Activated CD8-positive, alpha-beta T cell treated with anti-CD3 and anti-CD28 coated beads for 36 hours (primary cell): ENCODE measurements at regions of chr20 and their contacts with region 1.

Region 1: DNA sequence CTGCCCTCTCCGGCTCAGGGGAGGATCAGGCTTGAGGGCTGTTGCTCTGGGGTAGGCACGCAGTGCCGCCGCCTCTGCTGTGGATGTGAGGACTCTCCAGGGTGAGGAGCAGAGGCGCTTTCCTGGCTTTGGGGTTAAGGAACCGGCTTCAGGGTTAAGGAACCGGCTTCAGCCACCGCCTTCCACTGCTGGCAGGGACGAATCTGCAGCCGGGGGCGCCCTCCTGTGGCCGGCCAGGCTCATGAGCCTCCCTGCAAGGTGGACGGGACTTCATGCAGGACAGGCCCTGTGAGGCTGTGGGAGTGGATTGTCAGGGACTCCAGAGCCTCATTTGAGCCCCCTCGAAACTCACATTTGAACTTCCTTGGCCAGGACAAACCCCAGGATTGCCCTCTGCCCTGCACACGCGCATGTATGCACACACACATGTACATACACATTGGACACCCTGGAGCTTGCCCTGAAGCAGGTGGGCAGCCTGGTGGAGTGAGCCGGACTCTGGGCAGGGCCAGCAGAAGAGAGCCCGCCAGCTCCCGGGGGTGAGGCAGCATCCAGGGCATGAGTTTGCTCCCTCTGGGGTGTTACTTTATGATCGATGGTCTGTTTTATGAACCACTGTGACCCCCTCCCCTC is 146.8 kb downstream of the PHACTR3 start:
- DNase-seq: peak; percentile 67
- ATAC-seq: peak; percentile 55
- H3K4me3 Mint-ChIP-seq: no peak overlapping the region
- H3K27ac Mint-ChIP-seq: no peak overlapping the region
- H3K4me1 Mint-ChIP-seq: no peaks in the 10 kb centered on the region
- H3K27me3 Mint-ChIP-seq: peaks cover 4% of the 10 kb centered on the region
- CTCF ChIP-seq: peak; percentile 61

Region 2: GRCh38 chr20:59598625-59599310 is 152.4 kb before region 1 on chr20:
- CTCF ChIA-PET with region 1: interaction called, 6 read pairs
- POLR2A ChIA-PET with region 1: no interaction called
- intact Hi-C with region 1: loop called (anchors 5 kb)
- DNase-seq: peak; percentile 62
- ATAC-seq: peak; percentile 68
- H3K4me3 Mint-ChIP-seq: no peak overlapping the region
- H3K27ac Mint-ChIP-seq: no peak overlapping the region
- H3K4me1 Mint-ChIP-seq: no peaks in the 10 kb centered on the region
- H3K27me3 Mint-ChIP-seq: peaks cover 26% of the 10 kb centered on the region
- CTCF ChIP-seq: peak; percentile 83

Region 3: GRCh38 chr20:59645761-59646171 is 105.4 kb before region 1 on chr20:
- CTCF ChIA-PET with region 1: no interaction called
- POLR2A ChIA-PET with region 1: no interaction called
- intact Hi-C with region 1: no loop called
- DNase-seq: no peak
- ATAC-seq: no peak
- H3K4me3 Mint-ChIP-seq: no peak overlapping the region
- H3K27ac Mint-ChIP-seq: no peak overlapping the region
- H3K4me1 Mint-ChIP-seq: no peaks in the 10 kb centered on the region
- H3K27me3 Mint-ChIP-seq: peaks cover 9% of the 10 kb centered on the region
- CTCF ChIP-seq: no peak